ENCODE measurements at regions of chr3 and their contacts with region 1.

Region 1: DNA sequence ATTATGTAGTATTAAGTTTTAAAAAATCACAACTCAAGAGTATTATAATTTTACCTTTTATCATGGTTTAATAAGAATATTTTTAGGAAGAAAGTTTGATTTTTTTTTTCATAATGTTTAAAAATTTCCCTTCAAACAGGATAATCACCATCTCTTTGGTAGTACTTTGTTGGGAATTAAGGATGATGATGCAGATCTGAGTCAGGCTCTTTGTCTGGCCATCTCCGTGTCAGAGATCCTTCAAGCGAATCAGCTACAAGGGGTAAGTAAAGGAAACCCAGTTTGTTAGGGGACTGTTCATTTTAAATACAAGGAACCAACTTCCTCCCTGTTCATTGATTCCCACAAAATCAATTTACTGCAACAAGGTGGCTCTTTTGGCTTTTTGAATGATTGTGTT is 36.8 kb upstream of the NIT2 start:
- DNase-seq: peak; percentile 67
- ATAC-seq: peak; percentile 54; the same call in 1 of the 2 replicates
- H3K4me3 ChIP-seq: no peak overlapping the region
- H3K27ac ChIP-seq: no peak overlapping the region
- H3K4me1 ChIP-seq: no peaks in the 10 kb centered on the region
- H3K27me3 ChIP-seq: no peaks in the 10 kb centered on the region
- CTCF ChIP-seq: no peak
- POLR2A ChIP-seq: no peak
- RAD21 ChIP-seq: no peak

Region 2: DNA sequence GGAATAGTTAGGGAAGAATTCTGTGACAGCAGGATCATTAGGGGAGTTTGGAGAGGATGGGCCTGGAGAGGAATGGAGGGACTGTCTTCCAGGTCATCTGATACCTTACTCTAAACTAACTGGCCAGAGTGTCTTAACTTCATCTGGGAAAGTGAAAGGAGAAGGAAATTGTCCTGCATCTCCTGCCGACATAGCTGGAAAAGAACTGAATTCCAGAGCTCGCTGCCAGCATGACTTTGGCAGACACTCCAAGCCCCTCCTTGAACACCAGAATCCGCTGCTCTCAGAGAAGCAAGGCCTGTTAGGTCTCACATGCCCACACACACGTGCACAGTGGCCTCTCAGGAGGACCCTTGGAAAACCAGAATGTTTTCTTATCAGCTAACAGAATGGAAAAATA is 684.9 kb after region 1 on chr3:
- CTCF ChIA-PET with region 1: no interaction called
- POLR2A ChIA-PET with region 1: interaction called, 10 read pairs
- dilution Hi-C with region 1: no loop called
- in situ Hi-C with region 1: no loop called
- intact Hi-C with region 1: no loop called
- DNase-seq: peak; percentile 58
- ATAC-seq: peak; percentile 82
- H3K4me3 ChIP-seq: no peak overlapping the region
- H3K27ac ChIP-seq: peak overlapping the region; percentile 36; the same call in 1 of the 2 replicates
- H3K4me1 ChIP-seq: no peaks in the 10 kb centered on the region
- H3K27me3 ChIP-seq: no peaks in the 10 kb centered on the region
- CTCF ChIP-seq: no peak
- POLR2A ChIP-seq: no peak
- RAD21 ChIP-seq: no peak

Region 3: GRCh38 chr3:101646726-101647125 is 1348.9 kb after region 1 on chr3:
- CTCF ChIA-PET with region 1: no interaction called
- POLR2A ChIA-PET with region 1: no interaction called
- dilution Hi-C with region 1: no loop called
- in situ Hi-C with region 1: no loop called
- intact Hi-C with region 1: loop called (anchors 5 kb)
- DNase-seq: peak; percentile 16
- ATAC-seq: no peak
- H3K4me3 ChIP-seq: no peak overlapping the region
- H3K27ac ChIP-seq: no peak overlapping the region
- H3K4me1 ChIP-seq: 0 out of 2 replicates have a peak, but pooled peaks cover 1% of the 10 kb centered on the region
- H3K27me3 ChIP-seq: no peaks in the 10 kb centered on the region
- CTCF ChIP-seq: no peak
- POLR2A ChIP-seq: no peak
- RAD21 ChIP-seq: no peak

Measured in IMR-90 (cell line).